Activated naive CD4-positive, alpha-beta T cell treated with anti-CD3 and anti-CD28 coated beads for 36 hours (primary cell): ENCODE measurements at regions of chr2 and their contacts with region 1.

Region 1: DNA sequence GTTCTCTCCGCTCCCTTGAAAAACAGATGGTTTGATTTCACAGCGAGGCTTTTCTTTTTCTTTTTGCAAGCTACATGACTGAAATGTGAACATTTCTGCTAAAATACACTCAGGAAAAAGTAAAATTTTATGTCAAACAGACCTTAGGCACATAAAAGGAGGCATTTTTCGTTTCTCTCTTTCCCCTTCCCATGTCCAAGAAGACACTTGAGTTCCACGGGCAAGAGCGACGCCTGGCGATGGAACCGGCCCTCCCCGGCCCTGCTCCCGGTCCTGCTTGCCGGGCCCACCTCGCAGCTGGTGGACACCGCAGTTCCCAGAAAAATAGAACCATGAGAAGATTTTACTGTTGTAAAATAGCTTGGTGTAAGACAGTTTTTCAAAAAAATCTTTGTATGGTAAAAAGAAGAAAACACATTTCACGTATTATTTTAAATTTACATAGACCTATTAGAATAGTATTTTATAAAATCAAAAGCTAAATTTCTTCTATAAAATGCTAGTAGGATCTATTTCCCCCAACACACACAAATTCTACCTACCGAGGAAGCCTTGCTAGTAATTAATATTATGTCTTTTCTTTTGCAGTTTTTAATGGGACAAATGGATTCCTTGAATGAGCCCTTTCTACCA is 2.3 kb upstream of the ALKAL2 start:
- DNase-seq: peak; percentile 73
- H3K4me3 Mint-ChIP-seq: peak overlapping the region; percentile 66
- H3K27ac Mint-ChIP-seq: no peak overlapping the region
- H3K4me1 Mint-ChIP-seq: peaks cover 2% of the 10 kb centered on the region
- H3K27me3 Mint-ChIP-seq: peaks cover 28% of the 10 kb centered on the region

Region 2: GRCh38 chr2:162473-163382 is 127.5 kb before region 1 on chr2:
- CTCF ChIA-PET with region 1: no interaction called
- intact Hi-C with region 1: no loop called
- DNase-seq: no peak
- H3K4me3 Mint-ChIP-seq: no peak overlapping the region
- H3K27ac Mint-ChIP-seq: no peak overlapping the region
- H3K4me1 Mint-ChIP-seq: peaks cover 11% of the 10 kb centered on the region
- H3K27me3 Mint-ChIP-seq: peaks cover 5% of the 10 kb centered on the region

Region 3: DNA sequence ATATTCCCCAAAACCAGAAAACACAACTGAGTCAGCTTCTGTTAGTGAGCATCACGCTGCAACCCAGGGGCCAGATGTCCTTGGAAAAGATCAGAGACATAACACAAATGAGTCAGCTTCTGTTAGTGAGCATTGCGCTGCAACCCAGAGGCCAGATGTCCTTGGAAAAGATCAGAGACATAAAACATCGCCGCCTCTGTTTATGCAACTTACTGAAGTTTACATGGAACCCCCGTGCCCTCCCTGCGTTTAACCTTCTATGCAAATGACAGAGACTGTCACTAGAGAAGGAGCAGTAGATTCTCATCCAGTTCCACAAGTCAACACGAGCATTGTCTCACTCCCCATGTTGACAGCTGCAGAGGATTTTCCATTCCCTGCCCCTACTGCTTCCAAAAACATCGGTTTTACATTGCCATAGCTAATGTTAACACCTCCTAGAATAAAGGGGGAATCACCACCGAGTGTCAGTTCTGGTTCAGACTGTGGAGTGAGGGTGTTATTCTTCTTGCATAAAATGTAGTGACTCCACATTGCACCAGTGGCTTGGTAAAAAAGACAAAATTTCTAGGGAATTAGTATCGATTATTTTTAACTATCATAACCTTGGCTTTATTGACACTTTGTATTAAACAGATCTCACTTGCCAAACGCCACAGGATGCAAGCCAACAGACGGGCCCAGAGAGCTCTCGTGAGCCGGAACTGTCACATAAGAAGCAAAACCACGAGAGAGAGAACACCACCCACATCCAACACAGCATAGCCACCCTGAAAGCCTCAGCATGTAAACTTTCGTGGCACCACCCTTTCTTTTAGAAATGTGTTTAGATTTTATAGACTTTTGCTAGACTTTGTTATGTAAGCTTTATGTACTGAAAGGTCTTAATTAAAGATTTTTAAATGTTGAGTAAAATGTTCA is 114.1 kb before region 1 on chr2:
- CTCF ChIA-PET with region 1: no interaction called
- intact Hi-C with region 1: loop called (anchors 1 kb)
- DNase-seq: peak; percentile 59
- H3K4me3 Mint-ChIP-seq: peak overlapping the region; percentile 5
- H3K27ac Mint-ChIP-seq: peak overlapping the region; percentile 70
- H3K4me1 Mint-ChIP-seq: peaks cover 35% of the 10 kb centered on the region
- H3K27me3 Mint-ChIP-seq: no peaks in the 10 kb centered on the region

Region 4: GRCh38 chr2:246489-247144 is 43.6 kb before region 1 on chr2:
- CTCF ChIA-PET with region 1: interaction called, 18 read pairs
- intact Hi-C with region 1: loop called (anchors 2 kb)
- DNase-seq: peak; percentile 51
- H3K4me3 Mint-ChIP-seq: no peak overlapping the region
- H3K27ac Mint-ChIP-seq: no peak overlapping the region
- H3K4me1 Mint-ChIP-seq: peaks cover 5% of the 10 kb centered on the region
- H3K27me3 Mint-ChIP-seq: no peaks in the 10 kb centered on the region

Region 5: GRCh38 chr2:332597-332996 is 42.4 kb after region 1 on chr2:
- CTCF ChIA-PET with region 1: no interaction called
- intact Hi-C with region 1: no loop called
- DNase-seq: no peak
- H3K4me3 Mint-ChIP-seq: no peak overlapping the region
- H3K27ac Mint-ChIP-seq: no peak overlapping the region
- H3K4me1 Mint-ChIP-seq: no peaks in the 10 kb centered on the region
- H3K27me3 Mint-ChIP-seq: peaks cover 29% of the 10 kb centered on the region